Caco-2 (cell line): ENCODE measurements at regions of chr9 and their contacts with region 1.

Region 1: DNA sequence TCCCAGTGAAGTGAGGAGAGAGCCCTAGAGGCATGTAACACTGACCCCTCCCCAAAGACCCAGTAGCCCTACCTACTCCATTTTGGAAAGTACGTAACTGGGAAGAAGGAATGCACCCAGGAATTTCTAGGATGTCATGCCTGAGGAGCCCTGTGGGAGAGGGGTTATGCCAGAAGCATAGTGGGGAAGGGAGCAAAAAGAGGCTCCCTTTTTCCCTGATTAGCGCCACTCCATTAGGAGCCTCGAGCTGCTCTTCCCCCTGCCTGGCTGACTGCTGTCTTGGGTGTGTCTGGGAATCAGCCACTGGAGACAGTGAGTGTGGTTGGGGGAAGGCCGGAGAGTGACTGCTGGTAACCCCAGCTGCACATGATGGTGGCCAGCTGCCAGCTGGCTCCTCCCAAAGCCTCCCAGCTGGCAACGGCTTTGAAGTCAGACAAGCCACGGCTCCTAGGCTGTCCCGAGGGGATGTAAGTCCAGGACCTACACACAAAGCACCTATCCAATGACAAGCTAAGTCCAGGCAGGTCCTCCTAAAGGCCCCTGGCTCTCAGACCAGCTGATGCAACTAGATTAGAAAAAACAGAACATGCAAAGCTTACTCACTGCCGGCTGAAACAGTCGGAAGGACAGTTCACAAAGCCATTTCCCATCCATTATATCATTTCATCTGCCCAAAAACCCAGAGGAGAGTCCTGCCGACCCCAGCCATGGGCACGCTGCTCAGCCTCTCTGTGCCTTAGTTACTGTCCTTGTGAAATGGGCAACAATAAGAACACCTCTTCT is 136.6 kb upstream of the ABCA1 start:
- DNase-seq: peak; percentile 86 to 92
- H3K4me3 ChIP-seq: no peak overlapping the region
- H3K4me3 Mint-ChIP-seq: peak overlapping the region; percentile 35
- H3K27ac Mint-ChIP-seq: peak overlapping the region; percentile 90
- H3K4me1 ChIP-seq: peaks cover 27% of the 10 kb centered on the region
- H3K4me1 Mint-ChIP-seq: peaks cover 31% of the 10 kb centered on the region
- H3K27me3 ChIP-seq: no peaks in the 10 kb centered on the region
- H3K27me3 Mint-ChIP-seq: no peaks in the 10 kb centered on the region
- CTCF ChIP-seq: no peak

Region 2: GRCh38 chr9:104863180-104863883 is 201.2 kb before region 1 on chr9:
- CTCF ChIA-PET with region 1: interaction called, 6 read pairs
- POLR2A ChIA-PET with region 1: no interaction called
- intact Hi-C with region 1: loop called (anchors 10 kb)
- DNase-seq: peak; percentile 62 to 69
- H3K4me3 ChIP-seq: no peak overlapping the region
- H3K4me3 Mint-ChIP-seq: no peak overlapping the region
- H3K27ac Mint-ChIP-seq: no peak overlapping the region
- H3K4me1 ChIP-seq: 0 out of 2 replicates have a peak, but pooled peaks cover 11% of the 10 kb centered on the region
- H3K4me1 Mint-ChIP-seq: peaks cover 19% of the 10 kb centered on the region
- H3K27me3 ChIP-seq: no peaks in the 10 kb centered on the region
- H3K27me3 Mint-ChIP-seq: no peaks in the 10 kb centered on the region
- CTCF ChIP-seq: peak; percentile 68 to 85

Region 3: DNA sequence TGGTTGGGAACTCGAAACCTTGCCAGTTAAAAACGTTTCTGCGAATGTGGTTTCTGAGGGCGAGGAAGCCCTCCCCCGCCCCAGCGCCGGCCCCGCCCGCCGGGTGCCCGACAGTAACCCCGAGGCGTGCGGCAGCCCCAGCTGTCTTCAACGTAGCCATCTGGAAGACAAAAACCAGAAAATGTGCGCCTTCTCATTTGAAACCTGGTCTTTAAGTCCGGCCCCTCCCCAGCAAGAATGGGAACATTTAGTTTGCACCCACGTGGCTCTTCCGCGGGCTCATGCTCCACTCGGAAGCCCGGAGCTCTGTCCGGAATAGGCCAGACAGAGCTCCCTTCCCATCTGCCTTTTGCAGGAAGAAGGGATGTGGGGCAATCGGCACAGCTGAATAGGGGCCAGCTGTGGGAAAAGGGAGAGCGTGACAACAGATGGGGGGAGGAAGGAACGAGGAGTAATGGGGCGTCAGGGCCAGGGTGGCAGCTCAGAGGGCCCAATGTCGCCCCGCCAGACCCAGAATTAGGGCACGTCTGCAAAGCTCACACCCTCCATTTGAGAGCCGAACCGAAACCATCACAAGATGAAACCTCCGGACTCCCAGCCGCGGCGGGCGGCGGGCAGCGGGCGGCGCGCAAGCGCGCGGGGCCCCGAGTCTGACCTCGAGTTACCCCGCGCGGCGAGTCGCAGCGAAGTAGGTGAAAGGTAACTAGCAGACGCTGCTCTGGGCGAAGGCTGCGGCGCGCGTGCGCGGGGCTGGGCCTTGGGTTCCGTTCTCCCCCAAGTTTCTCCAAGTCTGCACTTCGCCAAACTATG is 73.2 kb before region 1 on chr9:
- CTCF ChIA-PET with region 1: no interaction called
- POLR2A ChIA-PET with region 1: no interaction called
- intact Hi-C with region 1: loop called (anchors 1 kb)
- DNase-seq: peak; percentile 84 to 85
- H3K4me3 ChIP-seq: peak overlapping the region; percentile 68
- H3K4me3 Mint-ChIP-seq: peak overlapping the region; percentile 96
- H3K27ac Mint-ChIP-seq: peak overlapping the region; percentile 82
- H3K4me1 ChIP-seq: peaks cover 29% of the 10 kb centered on the region
- H3K4me1 Mint-ChIP-seq: peaks cover 17% of the 10 kb centered on the region
- H3K27me3 ChIP-seq: no peaks in the 10 kb centered on the region
- H3K27me3 Mint-ChIP-seq: no peaks in the 10 kb centered on the region
- CTCF ChIP-seq: no peak

Region 4: GRCh38 chr9:105087910-105088888 is 23.7 kb after region 1 on chr9:
- CTCF ChIA-PET with region 1: interaction called, 4 read pairs
- POLR2A ChIA-PET with region 1: interaction called, 9 read pairs
- intact Hi-C with region 1: loop called (anchors 1 kb)
- DNase-seq: peak; percentile 69 to 74
- H3K4me3 ChIP-seq: no peak overlapping the region
- H3K4me3 Mint-ChIP-seq: peak overlapping the region; percentile 37
- H3K27ac Mint-ChIP-seq: peak overlapping the region; percentile 84
- H3K4me1 ChIP-seq: peaks cover 48% of the 10 kb centered on the region
- H3K4me1 Mint-ChIP-seq: peaks cover 28% of the 10 kb centered on the region
- H3K27me3 ChIP-seq: no peaks in the 10 kb centered on the region
- H3K27me3 Mint-ChIP-seq: no peaks in the 10 kb centered on the region
- CTCF ChIP-seq: no peak

Region 5: DNA sequence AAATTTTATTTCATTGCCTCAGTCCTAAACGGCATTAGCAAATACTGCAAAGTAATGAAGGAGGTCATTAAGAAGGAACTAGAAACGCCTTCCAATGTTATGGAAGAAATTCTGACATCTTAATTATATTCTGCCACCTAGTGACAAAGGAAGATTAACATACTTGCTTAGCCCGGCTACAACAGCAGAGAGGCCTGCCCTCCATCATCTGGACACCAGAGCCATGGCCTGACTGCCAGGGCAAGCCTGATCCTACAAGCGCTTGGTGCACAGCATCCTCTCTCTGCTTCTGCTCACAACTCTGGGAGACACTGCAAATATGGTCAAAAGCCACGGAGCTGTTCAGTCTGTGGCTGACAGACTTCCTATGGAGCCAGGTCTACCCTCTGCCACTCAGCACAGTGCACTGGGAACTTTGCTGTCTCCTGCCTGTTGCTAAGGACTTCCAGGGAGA is 92.7 kb after region 1 on chr9:
- CTCF ChIA-PET with region 1: no interaction called
- POLR2A ChIA-PET with region 1: no interaction called
- intact Hi-C with region 1: loop called (anchors 1 kb)
- DNase-seq: peak in 1 of 2 experiments; percentile 52
- H3K4me3 ChIP-seq: no peak overlapping the region
- H3K4me3 Mint-ChIP-seq: no peak overlapping the region
- H3K27ac Mint-ChIP-seq: no peak overlapping the region
- H3K4me1 ChIP-seq: 0 out of 2 replicates have a peak, but pooled peaks cover 4% of the 10 kb centered on the region
- H3K4me1 Mint-ChIP-seq: no peaks in the 10 kb centered on the region
- H3K27me3 ChIP-seq: no peaks in the 10 kb centered on the region
- H3K27me3 Mint-ChIP-seq: no peaks in the 10 kb centered on the region
- CTCF ChIP-seq: peak; percentile 32 to 35

Region 6: GRCh38 chr9:105414947-105415661 is 350.6 kb after region 1 on chr9:
- CTCF ChIA-PET with region 1: no interaction called
- POLR2A ChIA-PET with region 1: no interaction called
- intact Hi-C with region 1: loop called (anchors 10 kb)
- DNase-seq: peak; percentile 63 to 65
- H3K4me3 ChIP-seq: no peak overlapping the region
- H3K4me3 Mint-ChIP-seq: peak overlapping the region; percentile 56
- H3K27ac Mint-ChIP-seq: no peak overlapping the region
- H3K4me1 ChIP-seq: peaks cover 22% of the 10 kb centered on the region
- H3K4me1 Mint-ChIP-seq: peaks cover 14% of the 10 kb centered on the region
- H3K27me3 ChIP-seq: no peaks in the 10 kb centered on the region
- H3K27me3 Mint-ChIP-seq: no peaks in the 10 kb centered on the region
- CTCF ChIP-seq: peak; percentile 86 to 94